Activated T-helper 1 cell treated with anti-CD3 and anti-CD28 coated beads, Interleukin-12 subunit alpha, Interleukin-12 subunit beta, Interleukin-2, Interleukin-4 antibody, amounts not matched to agents 30 ng/mL and 10 ng/mL and 1 ng/mL, durations not matched to agents 14 hours and 24 hours and 36 hours (primary cell): ENCODE measurements at regions of chr9 and their contacts with region 1.

Region 1: GRCh38 chr9:126398403-126399058 is 71.9 kb downstream of the MVB12B start:
- DNase-seq: peak; percentile 67
- H3K4me3 Mint-ChIP-seq: peak overlapping the region; percentile 19
- H3K27ac Mint-ChIP-seq: no peak overlapping the region
- H3K4me1 Mint-ChIP-seq: peaks cover 64% of the 10 kb centered on the region
- H3K27me3 Mint-ChIP-seq: peaks cover 15% of the 10 kb centered on the region

Region 2: GRCh38 chr9:125407974-125408900 is 990.3 kb before region 1 on chr9:
- intact Hi-C with region 1: loop called (anchors 1 kb)
- DNase-seq: peak; percentile 53
- H3K4me3 Mint-ChIP-seq: peak overlapping the region; percentile 79
- H3K27ac Mint-ChIP-seq: no peak overlapping the region
- H3K4me1 Mint-ChIP-seq: peaks cover 7% of the 10 kb centered on the region
- H3K27me3 Mint-ChIP-seq: peaks cover 15% of the 10 kb centered on the region

Region 3: GRCh38 chr9:126036881-126037291 is 361.6 kb before region 1 on chr9:
- intact Hi-C with region 1: no loop called
- DNase-seq: no peak
- H3K4me3 Mint-ChIP-seq: no peak overlapping the region
- H3K27ac Mint-ChIP-seq: no peak overlapping the region
- H3K4me1 Mint-ChIP-seq: no peaks in the 10 kb centered on the region
- H3K27me3 Mint-ChIP-seq: peaks cover 15% of the 10 kb centered on the region

Region 4: DNA sequence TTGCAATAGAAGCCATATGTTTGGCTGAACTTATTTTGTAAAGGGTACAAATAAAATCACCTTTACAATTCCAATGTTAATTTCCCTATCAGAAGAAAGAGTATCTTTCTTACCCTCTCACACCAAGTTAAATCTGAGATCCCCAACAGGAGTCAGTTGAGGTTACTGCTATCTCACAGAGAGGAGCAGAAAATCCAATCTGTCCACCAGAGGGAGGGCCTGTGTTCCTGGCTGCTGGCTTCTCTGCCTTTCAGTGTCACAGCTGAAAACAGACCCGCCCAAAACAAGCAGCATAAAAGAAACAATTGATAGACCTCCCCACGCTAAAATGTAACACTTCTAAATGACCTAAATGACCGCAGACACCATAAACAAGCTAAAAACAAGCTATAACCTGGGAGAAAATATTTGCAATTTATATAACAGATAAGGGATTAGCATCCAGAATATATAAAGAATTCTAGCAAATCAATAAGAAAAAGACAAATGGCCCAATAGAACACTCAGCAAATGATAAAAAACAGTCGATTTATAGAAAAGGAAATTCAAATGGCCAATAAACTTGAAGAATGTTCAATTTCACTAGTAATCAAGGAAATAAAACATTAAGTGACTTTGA is 96.4 kb before region 1 on chr9:
- intact Hi-C with region 1: loop called (anchors 1 kb)
- DNase-seq: peak; percentile 56
- H3K4me3 Mint-ChIP-seq: no peak overlapping the region
- H3K27ac Mint-ChIP-seq: no peak overlapping the region
- H3K4me1 Mint-ChIP-seq: peaks cover 5% of the 10 kb centered on the region
- H3K27me3 Mint-ChIP-seq: peaks cover 5% of the 10 kb centered on the region

Region 5: GRCh38 chr9:126375386-126375785 is 23.1 kb before region 1 on chr9:
- intact Hi-C with region 1: no loop called
- DNase-seq: no peak
- H3K4me3 Mint-ChIP-seq: no peak overlapping the region
- H3K27ac Mint-ChIP-seq: no peak overlapping the region
- H3K4me1 Mint-ChIP-seq: peaks cover 25% of the 10 kb centered on the region
- H3K27me3 Mint-ChIP-seq: peaks cover 7% of the 10 kb centered on the region

Region 6: GRCh38 chr9:126411225-126411947 is 12.9 kb after region 1 on chr9:
- intact Hi-C with region 1: loop called (anchors 1 kb)
- DNase-seq: peak; percentile 50
- H3K4me3 Mint-ChIP-seq: peak overlapping the region; percentile 71
- H3K27ac Mint-ChIP-seq: peak overlapping the region; percentile 37
- H3K4me1 Mint-ChIP-seq: peaks cover 29% of the 10 kb centered on the region
- H3K27me3 Mint-ChIP-seq: peaks cover 6% of the 10 kb centered on the region

Region 7: GRCh38 chr9:126471084-126471624 is 72.6 kb after region 1 on chr9:
- intact Hi-C with region 1: loop called (anchors 1 kb)
- DNase-seq: peak; percentile 81
- H3K4me3 Mint-ChIP-seq: peak overlapping the region; percentile 58
- H3K27ac Mint-ChIP-seq: peak overlapping the region; percentile 89
- H3K4me1 Mint-ChIP-seq: peaks cover 47% of the 10 kb centered on the region
- H3K27me3 Mint-ChIP-seq: peaks cover 50% of the 10 kb centered on the region

Region 8: GRCh38 chr9:126985870-126986498 is 587.5 kb after region 1 on chr9:
- intact Hi-C with region 1: loop called (anchors 5 kb)
- DNase-seq: peak; percentile 85
- H3K4me3 Mint-ChIP-seq: peak overlapping the region; percentile 80
- H3K27ac Mint-ChIP-seq: peak overlapping the region; percentile 87
- H3K4me1 Mint-ChIP-seq: peaks cover 75% of the 10 kb centered on the region
- H3K27me3 Mint-ChIP-seq: peaks cover 32% of the 10 kb centered on the region